Activated CD4-positive, alpha-beta T cell treated with anti-CD3 and anti-CD28 coated beads, Interleukin-2, amount 10 ng/mL, durations not matched to agents 24 days and 14 days (primary cell): ENCODE measurements at regions of chr3 and their contacts with region 1.

Region 1: GRCh38 chr3:45105855-45106671 is 40.1 kb downstream of the CDCP1 start:
- DNase-seq: peak; percentile 95
- H3K4me3 Mint-ChIP-seq: peak overlapping the region; percentile 62
- H3K27ac Mint-ChIP-seq: peak overlapping the region; percentile 89
- H3K4me1 Mint-ChIP-seq: peaks cover 70% of the 10 kb centered on the region
- H3K27me3 Mint-ChIP-seq: peaks cover 10% of the 10 kb centered on the region

Region 2: GRCh38 chr3:45043728-45044299 is 62.2 kb before region 1 on chr3:
- intact Hi-C with region 1: loop called (anchors 5 kb)
- DNase-seq: no peak
- H3K4me3 Mint-ChIP-seq: no peak overlapping the region
- H3K27ac Mint-ChIP-seq: no peak overlapping the region
- H3K4me1 Mint-ChIP-seq: peaks cover 24% of the 10 kb centered on the region
- H3K27me3 Mint-ChIP-seq: peaks cover 29% of the 10 kb centered on the region

Region 3: GRCh38 chr3:45119824-45120614 is 14.0 kb after region 1 on chr3:
- intact Hi-C with region 1: loop called (anchors 2 kb)
- DNase-seq: no peak
- H3K4me3 Mint-ChIP-seq: no peak overlapping the region
- H3K27ac Mint-ChIP-seq: no peak overlapping the region
- H3K4me1 Mint-ChIP-seq: peaks cover 47% of the 10 kb centered on the region
- H3K27me3 Mint-ChIP-seq: peaks cover 8% of the 10 kb centered on the region

Region 4: GRCh38 chr3:45205126-45205525 is 99.1 kb after region 1 on chr3:
- intact Hi-C with region 1: loop called (anchors 5 kb)
- DNase-seq: no peak
- H3K4me3 Mint-ChIP-seq: no peak overlapping the region
- H3K27ac Mint-ChIP-seq: no peak overlapping the region
- H3K4me1 Mint-ChIP-seq: peaks cover 13% of the 10 kb centered on the region
- H3K27me3 Mint-ChIP-seq: peaks cover 40% of the 10 kb centered on the region

Region 5: DNA sequence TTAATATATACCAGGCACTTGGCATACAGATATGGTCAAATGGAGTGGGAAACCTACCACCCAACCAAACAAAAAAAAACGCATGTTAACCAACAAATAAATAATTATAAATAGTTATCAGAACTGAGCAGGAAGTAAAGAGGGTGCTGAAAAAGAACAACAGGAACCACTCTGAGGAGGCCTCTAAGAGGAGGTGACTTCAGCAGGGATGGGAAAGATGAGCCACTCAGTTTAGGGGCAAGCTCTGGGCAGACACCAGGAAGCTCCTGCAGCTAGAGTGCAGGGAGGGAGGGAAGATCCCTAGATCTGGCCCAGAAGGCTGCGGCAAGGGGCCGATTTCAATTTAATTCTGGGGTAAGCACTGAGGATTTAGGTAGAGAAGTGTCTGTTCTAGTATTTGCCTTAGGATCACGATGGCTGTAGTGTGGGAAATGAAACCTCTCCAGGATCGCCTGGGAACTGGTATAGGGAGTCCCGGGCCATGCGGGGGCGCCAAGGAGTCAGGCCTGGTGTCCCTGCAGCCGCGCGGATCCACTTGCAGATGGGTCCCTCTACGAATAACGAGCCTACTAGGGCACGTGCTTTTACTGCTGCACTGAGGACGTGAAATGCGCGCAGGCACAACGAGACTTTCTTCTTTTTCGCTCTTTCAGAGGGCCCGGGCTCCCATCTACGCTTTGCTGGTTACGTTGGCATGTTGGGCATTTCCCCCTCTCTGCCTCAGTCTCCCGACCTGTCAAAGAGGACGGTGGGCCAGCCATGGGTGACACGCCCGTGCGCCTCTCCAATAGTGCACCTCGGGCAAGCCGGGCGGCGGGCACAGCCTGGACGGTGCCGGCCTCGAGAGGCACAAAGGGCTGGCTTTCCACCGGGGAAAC is 487.0 kb after region 1 on chr3:
- intact Hi-C with region 1: no loop called
- DNase-seq: peak; percentile 90
- H3K4me3 Mint-ChIP-seq: peak overlapping the region; percentile 71
- H3K27ac Mint-ChIP-seq: peak overlapping the region; percentile 88
- H3K4me1 Mint-ChIP-seq: peaks cover 40% of the 10 kb centered on the region
- H3K27me3 Mint-ChIP-seq: peaks cover 4% of the 10 kb centered on the region

Region 6: DNA sequence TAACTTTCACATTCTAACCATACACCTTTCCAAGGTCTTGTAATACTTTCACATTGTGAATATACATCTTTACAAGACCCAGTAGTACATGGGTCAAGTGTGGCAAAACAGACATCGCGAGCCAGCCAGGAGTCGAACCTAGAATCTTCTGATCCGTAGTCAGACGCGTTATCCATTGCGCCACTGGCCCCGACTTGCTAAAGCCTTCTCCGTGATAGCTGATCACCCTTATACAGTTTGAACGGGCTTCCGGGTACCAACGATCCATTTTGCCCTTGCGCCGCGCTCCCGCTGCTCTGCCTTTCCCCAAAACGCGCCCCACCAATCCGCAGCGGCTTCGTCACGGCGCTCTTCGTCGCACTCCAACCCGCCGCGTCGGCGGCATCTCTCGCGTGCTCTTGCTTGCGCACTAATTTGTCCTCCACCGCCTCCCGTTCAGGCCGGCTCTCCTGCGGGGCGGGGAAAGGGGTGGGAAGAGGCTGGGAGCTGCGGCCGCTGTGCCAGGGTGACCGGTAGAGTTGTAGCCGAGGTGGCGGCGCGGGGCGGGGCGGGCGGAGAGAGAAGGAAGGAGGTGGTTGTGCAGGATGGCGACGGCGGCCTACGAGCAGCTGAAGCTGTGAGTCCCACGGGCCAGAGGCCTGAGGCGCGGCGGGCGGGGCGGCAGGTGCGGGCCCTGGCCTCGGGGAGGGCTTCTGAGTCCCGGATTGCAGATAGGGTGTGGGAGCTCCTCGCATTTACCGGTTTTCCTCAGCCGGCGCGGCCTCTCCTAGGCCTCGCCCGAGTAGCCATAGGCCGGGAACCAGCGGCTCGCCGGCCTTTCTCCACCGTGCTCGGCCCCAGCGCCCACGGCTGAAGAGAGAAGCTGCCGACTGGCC is 583.1 kb after region 1 on chr3 and contains the start of gene SACM1L:
- intact Hi-C with region 1: loop called (anchors 10 kb)
- DNase-seq: peak; percentile 99
- H3K4me3 Mint-ChIP-seq: peak within 1 kb of the TSS; percentile 87
- H3K27ac Mint-ChIP-seq: peak within 1 kb of the TSS; percentile 94
- H3K4me1 Mint-ChIP-seq: peaks cover 46% of the 10 kb centered on the region
- H3K27me3 Mint-ChIP-seq: peaks cover 4% of the 10 kb centered on the region
- total RNA-seq, gene SACM1L: 88.0 and 91.7 TPM in 2 replicates

Region 7: DNA sequence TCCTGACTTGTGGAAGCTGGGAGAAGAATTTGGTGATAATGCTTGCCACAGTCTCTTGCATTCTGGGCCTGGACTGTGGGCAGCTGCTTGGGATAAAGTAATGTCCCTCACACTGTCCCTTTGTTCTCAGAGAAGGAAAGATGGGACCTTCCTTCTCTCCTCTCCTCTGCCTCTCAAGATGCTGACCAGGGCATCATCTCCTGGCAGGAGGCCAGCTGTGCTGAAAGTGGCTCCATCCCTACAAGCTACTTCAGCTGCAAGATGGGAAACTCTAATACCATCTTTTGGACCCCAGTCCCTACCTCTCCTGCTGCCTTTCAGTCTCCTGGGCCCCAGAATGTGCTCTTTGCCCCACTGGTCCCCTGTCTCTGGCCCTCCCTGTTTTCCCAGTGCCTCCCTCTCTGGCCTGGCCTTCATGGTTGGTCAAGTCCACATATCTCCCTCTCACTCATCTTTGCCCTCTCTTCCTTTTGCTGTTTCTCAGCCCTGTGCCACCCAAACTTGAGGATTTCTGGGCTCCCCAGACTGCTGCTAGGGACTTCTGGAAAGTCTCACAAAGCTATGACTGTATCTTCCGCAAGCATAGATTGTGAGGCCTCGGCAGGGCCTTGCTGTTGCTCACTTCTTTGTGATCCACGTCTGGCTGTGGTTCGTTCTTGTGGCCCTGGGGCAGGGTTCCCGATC is 697.3 kb after region 1 on chr3:
- intact Hi-C with region 1: no loop called
- DNase-seq: no peak
- H3K4me3 Mint-ChIP-seq: no peak overlapping the region
- H3K27ac Mint-ChIP-seq: no peak overlapping the region
- H3K4me1 Mint-ChIP-seq: no peaks in the 10 kb centered on the region
- H3K27me3 Mint-ChIP-seq: peaks cover 67% of the 10 kb centered on the region